PC-9 (cell line): ENCODE measurements at regions of chr3 and their contacts with region 1.

Region 1: DNA sequence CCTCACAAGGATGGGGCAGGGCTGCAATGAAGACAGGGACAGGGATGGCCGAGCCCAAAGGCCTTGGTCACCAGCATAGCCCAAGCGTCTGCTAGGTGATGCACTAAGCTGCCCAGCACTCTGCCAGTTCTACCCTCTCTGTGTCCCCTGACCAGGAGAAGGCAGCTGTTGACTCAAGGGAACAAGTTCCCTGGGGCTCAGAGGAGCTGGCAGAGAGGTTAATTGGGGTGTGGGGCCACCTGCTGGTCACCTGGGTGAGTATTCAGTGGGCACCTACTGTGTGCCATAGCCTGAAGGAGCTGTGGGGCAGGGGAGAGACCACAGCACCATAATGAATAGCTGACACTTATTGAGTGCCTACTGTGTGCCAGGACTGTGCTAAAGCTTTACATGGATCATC is 22.0 kb upstream of the DOCK3 start:
- DNase-seq: peak in 1 of 2 experiments; percentile 55
- H3K4me3 ChIP-seq: no peak overlapping the region
- H3K27ac ChIP-seq: no peak overlapping the region
- H3K4me1 ChIP-seq: no peaks in the 10 kb centered on the region
- H3K27me3 ChIP-seq: no peaks in the 10 kb centered on the region
- CTCF ChIP-seq: peak; percentile 76

Region 2: GRCh38 chr3:49719214-49719884 is 933.4 kb before region 1 on chr3 and contains the start of gene AMIGO3:
- CTCF ChIA-PET with region 1: no interaction called
- POLR2A ChIA-PET with region 1: no interaction called
- intact Hi-C with region 1: no loop called
- DNase-seq: no peak
- H3K4me3 ChIP-seq: no peak within 1 kb of the TSS
- H3K27ac ChIP-seq: no peak within 1 kb of the TSS
- H3K4me1 ChIP-seq: peaks cover 7% of the 10 kb centered on the region; the same call in 1 of the 2 replicates
- H3K27me3 ChIP-seq: no peaks in the 10 kb centered on the region
- CTCF ChIP-seq: no peak
- total RNA-seq, gene AMIGO3: 1.0 TPM in 1 of 2 replicates, not detected in the other

Region 3: DNA sequence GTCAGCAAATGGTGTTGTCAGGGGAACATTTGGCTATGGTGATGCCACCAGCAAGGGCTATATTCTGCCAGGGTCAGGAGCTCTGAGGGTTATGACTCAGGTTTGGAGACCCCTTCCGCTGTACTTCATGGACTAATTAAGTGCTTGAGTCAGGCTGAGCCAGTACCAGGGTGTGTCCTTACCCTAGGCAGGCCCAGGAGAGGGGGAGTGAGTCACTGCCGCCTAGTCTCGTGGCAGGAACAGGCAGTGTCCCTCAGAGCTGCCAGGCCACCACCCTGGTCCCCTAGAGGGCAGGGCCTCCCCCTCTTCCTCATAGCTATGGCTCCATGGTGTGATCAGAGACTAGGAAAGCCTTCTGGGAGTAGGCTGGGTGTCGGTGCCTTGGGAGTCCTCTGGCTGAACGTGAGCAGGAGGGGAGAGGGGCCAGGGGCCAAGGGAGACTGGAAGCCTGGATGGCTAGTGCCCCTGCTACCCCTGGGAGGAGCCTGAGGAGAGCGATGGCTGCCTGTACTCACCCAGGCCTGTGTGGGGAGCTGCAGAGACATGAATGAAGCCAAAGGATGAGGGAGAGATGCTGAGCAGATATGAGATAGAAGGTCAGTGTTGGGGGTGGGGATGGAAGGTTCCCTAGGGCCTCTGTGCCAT is 25.2 kb before region 1 on chr3:
- CTCF ChIA-PET with region 1: interaction called, 7 read pairs
- POLR2A ChIA-PET with region 1: no interaction called
- intact Hi-C with region 1: loop called (anchors 1 kb)
- DNase-seq: peak; percentile 83 to 96
- H3K4me3 ChIP-seq: peak overlapping the region; percentile 19; the same call in 1 of the 2 replicates
- H3K27ac ChIP-seq: peak overlapping the region; percentile 73
- H3K4me1 ChIP-seq: peaks cover 83% of the 10 kb centered on the region
- H3K27me3 ChIP-seq: no peaks in the 10 kb centered on the region
- CTCF ChIP-seq: peak; percentile 64

Region 4: DNA sequence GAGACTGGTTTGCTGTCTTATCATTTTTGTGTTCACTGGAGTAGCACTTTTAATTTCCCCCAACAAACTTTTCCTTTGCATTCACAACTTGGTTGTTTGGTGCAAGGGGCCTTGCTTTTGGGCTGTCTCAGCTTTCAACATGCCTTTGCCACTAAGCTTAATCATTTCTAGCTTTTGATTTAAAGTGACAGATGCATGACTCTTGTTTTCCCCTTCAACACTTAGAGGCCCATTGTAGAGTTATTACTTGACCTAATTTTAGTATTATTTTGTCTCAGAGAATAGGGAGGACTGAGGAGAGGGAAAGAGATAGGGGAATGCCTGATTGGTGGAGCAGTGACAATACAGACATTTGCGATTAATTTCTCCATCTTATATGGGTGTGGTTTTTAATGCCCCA is 392.3 kb after region 1 on chr3:
- CTCF ChIA-PET with region 1: no interaction called
- POLR2A ChIA-PET with region 1: interaction called, 12 read pairs
- intact Hi-C with region 1: no loop called
- DNase-seq: no peak
- H3K4me3 ChIP-seq: no peak overlapping the region
- H3K27ac ChIP-seq: no peak overlapping the region
- H3K4me1 ChIP-seq: no peaks in the 10 kb centered on the region
- H3K27me3 ChIP-seq: no peaks in the 10 kb centered on the region
- CTCF ChIP-seq: no peak